Posterior vena cava (tissue), 2 donors: ENCODE measurements at regions of chr3 and their contacts with region 1.

Region 1: DNA sequence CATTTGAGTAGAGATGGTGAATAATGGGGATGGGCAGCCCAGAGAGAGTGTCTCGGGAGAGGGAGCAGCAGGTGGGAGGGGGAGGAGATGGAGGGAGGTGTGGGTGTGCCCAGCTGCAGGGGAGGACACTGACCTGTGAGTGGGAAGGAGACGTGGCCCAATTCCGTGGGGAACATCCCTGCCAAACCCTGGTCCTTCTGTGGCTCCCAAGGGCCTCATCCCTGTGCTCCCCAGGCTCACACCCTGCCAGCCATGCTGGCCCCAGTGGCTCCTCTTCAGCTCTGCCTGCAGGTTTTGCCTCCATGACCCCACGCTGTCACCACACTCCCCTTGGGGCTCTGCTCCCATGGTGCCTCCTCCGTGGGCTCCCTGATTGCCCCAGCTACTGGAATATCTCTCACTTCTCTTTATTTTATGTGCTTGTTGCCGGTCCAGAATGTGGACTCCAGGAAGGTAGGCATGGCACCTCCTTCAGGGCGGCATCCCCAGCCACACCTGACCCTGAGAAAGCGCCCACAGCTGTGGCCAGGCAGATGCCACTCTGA is 7.0 kb downstream of the CFAP100 start:
- DNase-seq: no peak

Region 2: DNA sequence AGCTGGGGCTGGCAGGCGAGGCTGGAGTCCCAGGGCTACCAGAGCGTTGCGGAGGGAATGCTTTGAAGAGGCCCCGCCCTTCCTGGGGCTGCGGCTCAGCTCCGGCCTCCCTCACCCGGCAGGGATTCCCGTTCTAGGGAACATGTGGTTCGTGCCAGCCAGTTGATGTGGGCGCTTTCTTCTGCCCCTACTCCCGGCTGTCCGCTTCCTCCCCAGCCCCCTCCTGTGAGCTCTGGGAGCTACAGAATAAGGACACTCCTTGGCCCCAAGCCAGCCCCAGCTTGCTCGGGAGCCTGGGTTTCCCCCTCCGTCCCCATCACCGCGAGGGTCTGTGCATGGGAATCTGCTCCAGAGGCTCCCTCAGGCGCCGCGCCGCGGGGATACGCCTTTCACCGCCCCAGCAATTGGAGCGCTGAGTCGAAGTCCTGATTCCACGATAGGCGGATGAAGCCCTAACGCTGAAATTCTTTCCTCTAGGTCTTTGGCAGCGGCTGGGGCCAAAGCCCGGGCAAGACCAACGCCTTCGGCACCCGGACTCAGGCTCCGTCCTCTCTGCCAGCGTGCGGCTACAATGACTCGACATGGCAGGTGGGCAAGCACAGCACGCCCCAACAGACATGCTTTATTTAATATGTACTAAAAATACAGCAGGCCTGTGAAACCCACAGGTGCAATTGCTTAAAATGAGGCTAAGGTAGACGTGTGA is 114.0 kb before region 1 on chr3:
- intact Hi-C with region 1: no loop called
- DNase-seq: no peak

Region 3: GRCh38 chr3:126357295-126358037 is 44.2 kb before region 1 on chr3 and contains the start of gene KLF15:
- intact Hi-C with region 1: no loop called
- DNase-seq: peak; percentile 95
- total RNA-seq, gene KLF15: 10.6 to 15.5 TPM

Region 4: GRCh38 chr3:126939338-126939718 is 537.6 kb after region 1 on chr3:
- intact Hi-C with region 1: loop called in 1 of 2 experiments (anchors 5 kb)
- DNase-seq: no peak

Region 5: GRCh38 chr3:127988770-127989557 is 1587.3 kb after region 1 on chr3:
- intact Hi-C with region 1: no loop called
- DNase-seq: peak; percentile 48